Calu3 (cell line): ENCODE measurements at regions of chr10 and their contacts with region 1.

Region 1: GRCh38 chr10:11424456-11425297 is 186.8 kb downstream of the USP6NL start:
- DNase-seq: peak; percentile 64
- H3K4me3 Mint-ChIP-seq: no peak overlapping the region
- H3K27ac Mint-ChIP-seq: no peak overlapping the region
- H3K4me1 Mint-ChIP-seq: no peaks in the 10 kb centered on the region
- H3K27me3 Mint-ChIP-seq: peaks cover 16% of the 10 kb centered on the region
- CTCF ChIP-seq: peak; percentile 69

Region 2: DNA sequence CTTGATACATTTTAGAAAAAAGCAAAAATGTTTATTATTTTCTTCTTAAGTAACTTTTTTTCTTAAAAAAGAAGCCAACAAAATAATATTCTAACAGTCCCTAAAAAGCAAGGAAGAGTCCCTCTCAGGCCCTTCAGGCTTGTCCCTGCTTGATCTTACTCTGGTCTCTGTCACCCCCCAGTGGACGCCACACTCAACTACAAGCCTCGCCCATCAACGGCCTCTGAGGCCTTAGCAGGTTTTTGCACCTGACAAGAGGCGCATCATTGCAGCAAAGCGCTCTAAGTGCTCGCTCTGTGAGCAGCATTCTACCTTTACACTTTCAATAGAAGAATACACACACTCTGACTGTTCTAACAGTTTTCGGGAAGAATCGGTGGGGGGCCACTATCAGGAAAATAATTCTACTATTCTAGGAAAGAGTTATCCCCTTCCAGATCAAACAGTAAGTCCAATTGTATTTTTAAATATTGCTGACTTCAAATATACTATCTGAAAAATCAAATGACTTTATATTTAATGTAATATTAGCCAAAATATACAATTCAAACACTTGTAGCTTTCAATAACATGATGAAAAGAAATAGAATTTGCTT is 47.6 kb after region 1 on chr10:
- CTCF ChIA-PET with region 1: no interaction called
- intact Hi-C with region 1: loop called (anchors 2 kb)
- DNase-seq: peak; percentile 74
- H3K4me3 Mint-ChIP-seq: no peak overlapping the region
- H3K27ac Mint-ChIP-seq: peak overlapping the region; percentile 40
- H3K4me1 Mint-ChIP-seq: no peaks in the 10 kb centered on the region
- H3K27me3 Mint-ChIP-seq: no peaks in the 10 kb centered on the region
- CTCF ChIP-seq: peak; percentile 83

Region 3: DNA sequence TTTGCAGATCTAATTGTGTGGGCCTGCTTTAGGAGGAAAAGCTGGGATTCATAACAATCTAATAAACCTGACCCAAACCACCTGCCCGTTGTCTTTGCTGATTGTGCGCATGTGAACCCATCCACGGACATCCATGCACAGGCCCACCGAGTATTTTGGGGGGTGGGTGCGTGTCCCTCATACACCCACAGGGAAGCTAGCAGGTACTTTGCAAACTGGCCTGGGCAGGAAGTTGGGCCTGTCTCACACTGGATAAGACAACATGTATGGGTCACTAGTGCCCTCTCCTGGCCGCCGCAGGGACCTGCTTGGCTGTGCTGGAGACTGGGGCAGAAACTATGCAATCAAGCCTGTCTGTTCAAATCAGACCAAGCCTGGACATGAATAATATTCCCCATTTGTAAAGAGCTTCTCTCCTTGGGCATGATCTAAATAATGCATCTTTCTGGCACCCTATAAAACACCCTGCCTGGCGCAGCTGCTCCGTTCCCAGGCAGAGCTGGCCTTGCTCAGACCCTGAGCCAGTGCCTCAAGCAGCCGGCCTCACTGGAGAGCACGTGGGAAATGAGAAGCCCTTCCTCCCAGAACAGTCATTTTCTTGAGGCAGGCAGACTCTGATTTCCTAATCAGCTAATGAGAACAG is 333.3 kb after region 1 on chr10:
- CTCF ChIA-PET with region 1: interaction called, 6 read pairs
- intact Hi-C with region 1: loop called (anchors 1 kb)
- DNase-seq: peak; percentile 89
- H3K4me3 Mint-ChIP-seq: no peak overlapping the region
- H3K27ac Mint-ChIP-seq: peak overlapping the region; percentile 42
- H3K4me1 Mint-ChIP-seq: no peaks in the 10 kb centered on the region
- H3K27me3 Mint-ChIP-seq: no peaks in the 10 kb centered on the region
- CTCF ChIP-seq: peak; percentile 79